ENCODE measurements at regions of chr15 and their contacts with region 1.

Region 1: GRCh38 chr15:37880009-37880834 is 54.2 kb upstream of the TMCO5A start:
- DNase-seq: peak; percentile 59
- ATAC-seq: peak; percentile 32; the same call in 1 of the 2 replicates
- H3K4me3 ChIP-seq: no peak overlapping the region
- H3K27ac ChIP-seq: no peak overlapping the region
- H3K4me1 ChIP-seq: peaks cover 26% of the 10 kb centered on the region
- H3K27me3 ChIP-seq: peaks cover 49% of the 10 kb centered on the region
- CTCF ChIP-seq: peak; percentile 96

Region 2: DNA sequence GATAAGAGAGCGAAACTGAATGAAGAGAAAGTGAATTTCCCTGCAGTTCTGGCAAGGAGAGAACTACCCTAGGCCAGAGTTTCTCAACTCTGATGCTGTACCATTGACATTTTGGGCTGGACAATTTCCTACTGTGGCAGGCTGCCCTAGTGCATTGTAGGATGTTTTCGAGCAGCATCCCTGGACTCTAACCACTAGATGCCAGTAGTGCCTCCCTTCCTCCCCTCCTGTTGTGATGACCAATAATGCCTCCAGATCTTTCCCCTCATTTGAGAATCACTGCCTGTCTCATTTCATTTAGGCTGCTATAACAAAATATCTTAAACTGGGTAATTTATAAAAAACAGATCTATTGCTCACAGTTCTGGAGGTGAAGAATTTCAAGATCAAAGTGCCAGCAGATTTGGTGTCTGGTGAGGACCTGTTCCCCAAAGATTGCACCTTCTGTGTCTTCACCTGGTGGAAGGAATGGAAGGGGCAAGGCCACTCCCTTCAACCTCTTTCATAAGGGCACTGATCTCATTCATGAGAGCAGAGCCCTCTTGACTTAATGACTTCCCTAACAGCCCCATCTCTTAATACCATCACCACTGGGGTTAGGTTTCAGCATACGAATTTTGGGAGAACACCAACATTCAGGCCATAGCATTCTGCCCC is 591.0 kb before region 1 on chr15:
- CTCF ChIA-PET with region 1: interaction called, 3 read pairs
- POLR2A ChIA-PET with region 1: no interaction called
- intact Hi-C with region 1: loop called (anchors 1 kb)
- DNase-seq: peak; percentile 49
- ATAC-seq: peak; percentile 81
- H3K4me3 ChIP-seq: no peak overlapping the region
- H3K27ac ChIP-seq: no peak overlapping the region
- H3K4me1 ChIP-seq: no peaks in the 10 kb centered on the region
- H3K27me3 ChIP-seq: peaks cover 16% of the 10 kb centered on the region; the same call in 1 of the 2 replicates
- CTCF ChIP-seq: peak; percentile 62

Region 3: DNA sequence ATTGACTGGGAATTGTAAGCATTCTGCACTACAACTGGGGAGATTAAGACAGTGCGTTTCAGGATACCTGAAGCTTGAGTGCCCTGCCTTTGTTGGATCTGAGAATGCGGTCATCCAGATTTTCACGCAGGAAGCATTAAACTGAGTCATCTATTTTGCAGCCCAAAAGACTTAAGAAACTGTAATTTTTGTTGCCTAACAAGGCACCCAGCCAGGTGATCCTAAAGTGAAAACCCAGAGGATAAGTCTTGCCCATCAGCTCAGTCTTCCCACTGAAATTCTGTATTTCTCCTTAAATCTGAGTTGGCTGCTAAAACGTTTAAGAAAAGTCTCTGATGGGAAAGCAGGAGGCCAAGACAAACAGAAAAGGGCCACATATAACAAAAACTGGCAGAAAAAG is 188.3 kb before region 1 on chr15:
- CTCF ChIA-PET with region 1: interaction called, 3 read pairs
- POLR2A ChIA-PET with region 1: no interaction called
- intact Hi-C with region 1: loop called (anchors 5 kb)
- DNase-seq: peak; percentile 29
- ATAC-seq: no peak
- H3K4me3 ChIP-seq: no peak overlapping the region
- H3K27ac ChIP-seq: no peak overlapping the region
- H3K4me1 ChIP-seq: no peaks in the 10 kb centered on the region
- H3K27me3 ChIP-seq: peaks cover 77% of the 10 kb centered on the region
- CTCF ChIP-seq: no peak

Region 4: DNA sequence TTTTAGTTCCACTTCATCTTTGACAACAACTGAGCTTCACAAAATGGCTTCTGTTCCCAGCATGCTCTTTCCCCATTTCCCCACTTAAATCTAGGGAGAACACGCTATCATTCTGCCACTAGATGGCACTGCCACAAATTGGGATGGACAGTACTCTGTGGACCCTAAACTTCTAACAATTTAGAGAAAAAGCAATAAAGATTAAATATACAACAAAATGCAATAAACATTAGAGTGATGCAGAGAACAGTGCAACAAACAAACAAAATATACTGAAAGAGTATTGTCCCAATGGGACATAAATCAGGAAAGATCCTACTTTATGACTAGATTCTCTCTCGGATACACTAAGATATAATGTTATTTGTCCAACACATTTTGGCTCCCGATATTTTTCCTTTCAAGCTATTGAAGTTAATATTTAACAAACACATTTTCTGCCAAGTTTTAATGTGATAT is 115.5 kb before region 1 on chr15:
- CTCF ChIA-PET with region 1: interaction called, 12 read pairs
- POLR2A ChIA-PET with region 1: no interaction called
- intact Hi-C with region 1: loop called (anchors 1 kb)
- DNase-seq: peak; percentile 83
- ATAC-seq: peak; percentile 95
- H3K4me3 ChIP-seq: no peak overlapping the region; the same call in 1 of the 2 replicates
- H3K27ac ChIP-seq: no peak overlapping the region
- H3K4me1 ChIP-seq: peaks cover 12% of the 10 kb centered on the region; the same call in 1 of the 2 replicates
- H3K27me3 ChIP-seq: no peaks in the 10 kb centered on the region
- CTCF ChIP-seq: peak; percentile 91

Region 5: DNA sequence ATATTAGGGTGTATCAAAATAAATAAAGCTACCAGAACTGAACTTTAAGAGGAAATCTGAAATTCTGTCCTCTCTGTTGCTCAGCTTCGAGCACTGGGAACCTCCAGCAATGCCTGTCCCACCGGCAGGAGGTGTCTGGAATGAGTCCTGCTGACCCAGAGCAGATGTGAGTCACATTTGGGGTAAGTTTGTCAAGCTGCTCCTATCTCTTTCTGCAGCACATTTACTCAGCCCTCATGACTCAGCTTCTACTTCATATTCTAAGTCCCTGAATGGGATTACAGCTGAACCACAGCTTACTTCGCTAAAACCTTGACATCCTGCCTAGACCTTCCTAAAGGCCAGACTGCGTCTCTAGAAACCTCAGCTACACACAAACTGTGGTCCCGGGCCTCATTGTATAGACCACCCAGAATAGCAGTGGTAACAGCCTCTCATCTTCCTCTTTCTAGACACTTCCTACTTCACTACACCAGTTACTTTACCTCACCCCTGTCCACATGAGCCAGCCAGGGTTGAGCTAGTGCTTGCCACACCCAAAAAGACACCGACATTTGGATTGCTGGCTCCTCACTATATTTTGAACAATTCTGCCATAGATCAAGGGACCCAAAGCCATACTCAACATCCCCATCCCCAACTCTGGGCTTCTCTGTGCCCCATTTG is 55.4 kb before region 1 on chr15:
- CTCF ChIA-PET with region 1: interaction called, 3 read pairs
- POLR2A ChIA-PET with region 1: no interaction called
- intact Hi-C with region 1: loop called (anchors 2 kb)
- DNase-seq: peak; percentile 92
- ATAC-seq: peak; percentile 99
- H3K4me3 ChIP-seq: peak overlapping the region; percentile 2; the same call in 1 of the 2 replicates
- H3K27ac ChIP-seq: no peak overlapping the region
- H3K4me1 ChIP-seq: peaks cover 11% of the 10 kb centered on the region
- H3K27me3 ChIP-seq: peaks cover 29% of the 10 kb centered on the region; the same call in 1 of the 2 replicates
- CTCF ChIP-seq: peak; percentile 60